CD14-positive monocyte (primary cell): ENCODE measurements at regions of chr1 and their contacts with region 1.

Region 1: DNA sequence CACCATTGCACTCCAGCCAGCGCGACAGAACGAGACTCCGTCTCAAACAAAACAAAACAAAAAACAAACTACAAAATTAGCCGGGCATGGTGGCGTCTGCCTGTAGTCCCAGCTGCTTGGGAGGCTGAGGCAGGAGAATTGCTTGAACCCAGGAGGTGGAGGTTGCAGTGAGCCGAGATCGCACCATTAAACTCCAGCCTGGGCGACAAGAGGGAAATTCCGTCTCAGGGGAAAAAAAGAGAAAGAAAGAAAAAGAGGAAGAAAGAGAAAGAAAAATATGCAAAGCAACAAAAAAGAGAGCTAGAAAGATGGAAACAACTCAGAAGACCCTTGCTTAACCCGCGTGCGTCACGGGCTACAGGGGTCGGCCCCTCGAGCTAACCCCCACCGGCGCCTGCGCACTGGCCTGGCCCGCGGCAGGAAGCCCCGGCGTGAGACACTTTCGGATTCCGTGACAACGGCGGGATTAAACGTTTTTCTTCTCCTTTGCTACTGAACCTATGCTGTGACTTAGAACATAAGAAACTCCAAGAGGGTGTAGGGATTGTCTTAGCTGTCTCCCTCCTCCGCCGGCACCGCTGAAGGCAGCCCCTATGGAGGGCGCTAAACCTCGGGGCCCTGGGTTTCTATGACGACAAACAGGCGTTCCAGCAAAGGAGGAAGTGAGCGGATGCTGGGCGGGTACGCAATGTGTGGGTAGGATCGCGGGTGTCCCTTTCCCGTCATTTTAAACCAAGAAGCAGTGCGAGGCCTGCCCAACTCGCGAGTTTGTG is at the start of gene AXDND1:
- DNase-seq: peak; percentile 92 to 94 (median 93)
- H3K4me3 ChIP-seq: peak within 1 kb of the TSS; percentile 58 to 83 (median 77)
- H3K4me3 Mint-ChIP-seq: peak within 1 kb of the TSS; percentile 89 to 98
- H3K27ac ChIP-seq: peak within 1 kb of the TSS; percentile 99
- H3K27ac Mint-ChIP-seq: peak within 1 kb of the TSS; percentile 99 to 100 (median 100)
- H3K4me1 ChIP-seq: peaks cover 11 to 14% of the 10 kb centered on the region in 2 donors
- H3K4me1 Mint-ChIP-seq: peaks cover 17% of the 10 kb centered on the region
- H3K27me3 ChIP-seq: no peaks in the 10 kb centered on the region
- H3K27me3 Mint-ChIP-seq: peaks cover 0 to 6% (median 1%) of the 10 kb centered on the region in 3 donors
- CTCF ChIP-seq: no peak
- polyA plus RNA-seq, gene AXDND1: 0.09 TPM in 1 of 3 donors, not detected in the others

Region 2: DNA sequence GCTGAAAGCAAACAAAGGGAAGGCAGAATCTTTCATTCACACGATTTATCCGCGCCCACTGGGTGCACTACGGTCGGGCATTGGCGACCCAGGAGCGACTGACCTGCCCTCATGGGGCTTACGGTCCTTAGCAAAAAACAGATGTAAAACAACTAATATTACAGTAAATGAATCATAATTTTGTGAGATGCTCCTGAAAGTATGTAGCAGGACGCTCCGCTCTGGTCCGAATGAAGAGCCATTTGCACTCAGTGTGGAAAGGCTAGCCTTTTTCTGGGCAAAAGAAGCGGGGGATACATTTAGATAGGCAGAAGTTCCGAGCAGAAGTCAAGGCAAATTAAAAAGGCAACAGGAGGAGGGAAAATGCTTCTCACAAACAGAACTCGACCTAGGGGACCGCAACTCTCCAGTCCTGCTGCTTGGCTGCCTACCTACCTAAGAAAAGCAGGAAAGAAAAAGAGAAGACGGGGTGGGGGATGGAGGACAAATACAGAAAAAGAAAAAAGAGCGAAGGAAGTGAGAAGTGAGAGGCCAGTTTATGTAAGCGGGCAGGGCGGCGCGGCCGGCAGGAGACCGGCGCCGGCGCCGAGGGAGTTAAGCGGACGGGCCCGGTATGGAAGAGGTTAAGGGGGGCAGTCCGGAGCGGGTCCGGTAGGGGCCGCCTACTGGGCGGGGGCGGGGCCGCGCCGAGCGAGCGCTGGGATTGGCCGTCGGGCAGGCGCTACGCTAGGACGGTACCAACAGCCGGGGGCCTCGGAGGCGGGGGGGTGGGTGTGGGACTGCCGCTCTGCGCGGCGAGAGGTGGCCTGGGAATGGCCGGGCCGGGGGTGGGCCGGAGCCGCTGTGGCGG is 340.2 kb before region 1 on chr1 and contains the start of gene FAM20B:
- intact Hi-C with region 1: loop called in 1 of 2 experiments (anchors 5 kb)
- DNase-seq: peak; percentile 85 to 95 (median 89)
- H3K4me3 ChIP-seq: peak within 1 kb of the TSS; percentile 61 to 91 (median 85)
- H3K4me3 Mint-ChIP-seq: peak within 1 kb of the TSS; percentile 84 to 98
- H3K27ac ChIP-seq: peak within 1 kb of the TSS; percentile 78 to 88
- H3K27ac Mint-ChIP-seq: peak within 1 kb of the TSS; percentile 81 to 95 (median 89)
- H3K4me1 ChIP-seq: peaks cover 27 to 48% of the 10 kb centered on the region in 2 donors
- H3K4me1 Mint-ChIP-seq: peaks cover 46% of the 10 kb centered on the region
- H3K27me3 ChIP-seq: no peaks in the 10 kb centered on the region
- H3K27me3 Mint-ChIP-seq: peaks cover 0 to 5% (median 2%) of the 10 kb centered on the region in 3 donors
- CTCF ChIP-seq: no peak
- polyA plus RNA-seq, gene FAM20B: 4.0 to 6.7 (median 4.4) TPM

Region 3: DNA sequence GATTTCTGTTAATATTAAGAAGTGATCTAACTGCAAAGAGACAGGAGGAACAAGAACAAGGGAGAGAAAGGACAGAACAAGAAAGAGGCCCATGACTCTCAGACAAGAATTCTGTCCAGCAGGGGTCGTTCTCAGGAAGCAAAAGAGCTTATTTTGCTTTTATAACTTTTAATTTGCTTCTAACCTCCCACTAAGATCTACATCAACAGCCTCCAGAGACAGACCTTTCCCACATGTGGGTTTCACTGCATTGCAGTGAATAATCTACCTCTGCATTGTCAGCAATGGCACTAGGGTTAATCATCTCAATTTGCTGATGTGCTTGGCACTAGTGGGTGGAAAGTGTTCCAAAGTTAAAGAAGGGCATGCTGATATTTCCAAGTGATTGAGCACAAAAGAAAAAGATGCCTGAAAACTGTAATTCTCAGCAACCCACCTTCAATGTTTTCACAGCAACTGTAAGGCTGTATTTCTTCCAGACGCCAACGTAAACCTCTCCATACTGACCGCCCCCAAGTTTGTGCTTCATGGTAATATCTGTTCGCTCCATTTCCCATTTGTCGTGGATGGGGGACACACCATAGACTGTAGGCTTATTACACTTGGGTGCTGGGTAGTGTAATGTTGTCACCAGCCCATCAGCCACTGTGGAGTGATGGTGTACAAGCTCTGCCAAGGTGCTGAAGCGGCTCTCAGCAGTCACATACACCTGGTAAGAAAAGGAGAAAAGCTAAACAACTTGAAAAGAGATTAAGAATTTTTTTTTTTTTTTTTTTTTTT is 244.2 kb before region 1 on chr1:
- intact Hi-C with region 1: loop called (anchors 5 to 10 kb)
- DNase-seq: peak; percentile 32 to 57 (median 34)
- H3K4me3 ChIP-seq: no peak overlapping the region
- H3K4me3 Mint-ChIP-seq: no peak overlapping the region
- H3K27ac ChIP-seq: no peak overlapping the region
- H3K27ac Mint-ChIP-seq: peak overlapping the region in 5 of 7 donors; percentile 39 to 83 (median 54)
- H3K4me1 ChIP-seq: no peaks in the 10 kb centered on the region
- H3K4me1 Mint-ChIP-seq: no peaks in the 10 kb centered on the region
- H3K27me3 ChIP-seq: no peaks in the 10 kb centered on the region
- H3K27me3 Mint-ChIP-seq: no peaks in the 10 kb centered on the region
- CTCF ChIP-seq: peak; percentile 73

Region 4: DNA sequence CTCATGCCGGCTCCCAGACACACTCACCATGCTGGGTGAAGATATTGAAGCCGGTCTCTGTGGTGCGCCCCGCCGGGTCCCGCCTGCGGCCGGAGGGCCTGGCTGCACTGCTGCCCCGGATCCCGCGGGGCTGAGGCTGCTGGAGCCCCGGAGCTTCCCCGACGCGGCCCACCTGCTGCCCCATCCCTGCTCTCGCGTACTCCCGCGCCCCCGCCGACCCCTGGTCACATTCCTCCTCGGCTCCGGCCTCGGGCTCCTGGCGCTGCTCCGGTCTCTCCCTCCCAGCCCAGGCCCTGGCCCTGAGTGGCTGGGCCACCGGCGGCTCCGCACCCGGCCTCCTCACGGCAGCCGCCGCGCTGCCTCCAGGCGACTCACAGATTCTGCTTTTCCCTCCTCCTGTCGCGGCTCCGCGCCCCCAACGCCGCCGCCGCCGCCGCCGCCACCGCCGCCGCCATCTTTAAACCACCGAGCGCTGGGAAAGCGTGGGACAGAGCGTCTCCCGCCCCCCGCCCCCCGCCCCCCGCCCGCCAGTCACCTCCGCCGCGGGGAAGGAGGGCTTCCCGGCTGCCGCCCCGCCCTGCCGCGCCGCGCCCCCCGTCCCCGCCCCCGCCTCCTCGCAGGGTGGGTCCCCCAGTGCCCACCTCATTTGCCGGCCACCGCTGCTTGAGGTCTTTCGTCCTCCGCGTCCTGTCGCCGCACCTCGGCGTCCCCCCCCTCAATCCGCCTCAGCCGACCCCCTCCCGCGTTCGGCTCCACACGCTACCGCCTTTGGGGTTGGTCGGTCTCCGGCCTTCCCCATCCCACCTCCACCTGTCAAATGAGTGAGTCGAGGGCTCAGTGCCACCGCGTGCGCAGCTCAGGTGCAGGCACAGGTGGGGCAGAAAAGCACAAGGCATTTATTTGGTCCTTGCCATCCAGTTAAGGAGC is 136.0 kb before region 1 on chr1 and contains the start of gene ABL2:
- intact Hi-C with region 1: loop called in 1 of 2 experiments (anchors 10 kb)
- DNase-seq: peak in 2 of 3 donors; percentile 44 to 47
- H3K4me3 ChIP-seq: peak within 1 kb of the TSS; percentile 63 to 98 (median 89)
- H3K4me3 Mint-ChIP-seq: peak within 1 kb of the TSS; percentile 93 to 97
- H3K27ac ChIP-seq: peak within 1 kb of the TSS in 1 of 2 donors; percentile 73
- H3K27ac Mint-ChIP-seq: peak within 1 kb of the TSS; percentile 15 to 80 (median 54)
- H3K4me1 ChIP-seq: peaks cover 10 to 14% of the 10 kb centered on the region in 2 donors
- H3K4me1 Mint-ChIP-seq: peaks cover 31% of the 10 kb centered on the region
- H3K27me3 ChIP-seq: no peaks in the 10 kb centered on the region
- H3K27me3 Mint-ChIP-seq: peaks cover 0 to 5% (median 2%) of the 10 kb centered on the region in 3 donors
- CTCF ChIP-seq: no peak
- polyA plus RNA-seq, gene ABL2: 0.20 to 2.1 (median 1.4) TPM

Region 5: DNA sequence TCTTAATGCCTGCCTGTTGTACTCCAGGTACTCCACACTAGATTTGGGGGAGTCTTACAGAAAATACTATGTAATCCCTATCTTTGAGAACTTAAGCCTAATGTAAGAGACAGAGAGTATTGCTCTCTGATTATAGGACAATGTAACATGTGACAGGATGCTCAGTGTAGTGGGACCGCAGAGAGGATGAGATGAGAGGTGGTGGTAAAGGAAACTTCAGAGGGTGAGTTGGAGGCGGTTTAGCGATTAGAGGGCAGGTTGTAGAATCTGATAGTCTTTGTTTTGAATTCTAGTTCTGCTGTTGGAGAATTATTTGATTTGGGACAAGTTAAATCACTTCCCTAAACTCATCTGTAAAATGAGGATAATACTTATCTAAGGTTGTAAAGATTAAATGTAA is 66.6 kb before region 1 on chr1:
- intact Hi-C with region 1: loop called (anchors 5 kb)
- DNase-seq: no peak
- H3K4me3 ChIP-seq: no peak overlapping the region
- H3K4me3 Mint-ChIP-seq: no peak overlapping the region
- H3K27ac ChIP-seq: peak overlapping the region in 1 of 2 donors; percentile 9
- H3K27ac Mint-ChIP-seq: peak overlapping the region in 6 of 7 donors; percentile 5 to 43 (median 17)
- H3K4me1 ChIP-seq: peaks cover 34 to 54% of the 10 kb centered on the region in 2 donors
- H3K4me1 Mint-ChIP-seq: peaks cover 67% of the 10 kb centered on the region
- H3K27me3 ChIP-seq: no peaks in the 10 kb centered on the region
- H3K27me3 Mint-ChIP-seq: no peaks in the 10 kb centered on the region
- CTCF ChIP-seq: no peak

Region 6: DNA sequence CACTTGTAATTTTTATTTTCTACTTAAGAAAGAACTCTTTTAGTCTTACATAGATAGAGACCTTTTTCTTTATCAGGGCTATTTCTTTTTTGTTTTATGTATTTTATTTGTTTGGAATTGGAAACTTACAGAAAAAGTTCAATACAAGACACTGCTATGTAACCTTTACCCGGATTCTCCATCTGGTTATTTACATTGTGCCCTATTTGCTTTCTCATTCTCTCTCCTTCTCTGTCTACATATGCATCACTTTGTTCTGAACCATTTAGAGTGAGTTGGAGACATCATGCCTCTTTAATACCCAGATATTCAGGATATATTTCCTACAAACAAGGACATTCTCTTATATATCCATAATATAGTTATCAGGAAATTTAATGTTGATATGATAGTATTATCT is 18.5 kb after region 1 on chr1:
- intact Hi-C with region 1: no loop called
- DNase-seq: no peak
- H3K4me3 ChIP-seq: no peak overlapping the region
- H3K4me3 Mint-ChIP-seq: no peak overlapping the region
- H3K27ac ChIP-seq: no peak overlapping the region
- H3K27ac Mint-ChIP-seq: no peak overlapping the region
- H3K4me1 ChIP-seq: no peaks in the 10 kb centered on the region
- H3K4me1 Mint-ChIP-seq: no peaks in the 10 kb centered on the region
- H3K27me3 ChIP-seq: no peaks in the 10 kb centered on the region
- H3K27me3 Mint-ChIP-seq: peaks cover 0 to 4% (median 3%) of the 10 kb centered on the region in 3 donors
- CTCF ChIP-seq: no peak